T-cell (primary cell): ENCODE measurements at regions of chr12 and their contacts with region 1.

Region 1: GRCh38 chr12:123410041-123410412 is 26.1 kb downstream of the KMT5A start:
- DNase-seq: no peak
- ATAC-seq: no peak
- H3K4me3 ChIP-seq: no peak overlapping the region
- H3K4me3 Mint-ChIP-seq: no peak overlapping the region
- H3K27ac ChIP-seq: no peak overlapping the region
- H3K27ac Mint-ChIP-seq: no peak overlapping the region
- H3K4me1 ChIP-seq: no peaks in the 10 kb centered on the region
- H3K4me1 Mint-ChIP-seq: peaks cover 0 to 2% (median 0%) of the 10 kb centered on the region in 3 donors
- H3K27me3 ChIP-seq: no peaks in the 10 kb centered on the region
- H3K27me3 Mint-ChIP-seq: no peaks in the 10 kb centered on the region

Region 2: DNA sequence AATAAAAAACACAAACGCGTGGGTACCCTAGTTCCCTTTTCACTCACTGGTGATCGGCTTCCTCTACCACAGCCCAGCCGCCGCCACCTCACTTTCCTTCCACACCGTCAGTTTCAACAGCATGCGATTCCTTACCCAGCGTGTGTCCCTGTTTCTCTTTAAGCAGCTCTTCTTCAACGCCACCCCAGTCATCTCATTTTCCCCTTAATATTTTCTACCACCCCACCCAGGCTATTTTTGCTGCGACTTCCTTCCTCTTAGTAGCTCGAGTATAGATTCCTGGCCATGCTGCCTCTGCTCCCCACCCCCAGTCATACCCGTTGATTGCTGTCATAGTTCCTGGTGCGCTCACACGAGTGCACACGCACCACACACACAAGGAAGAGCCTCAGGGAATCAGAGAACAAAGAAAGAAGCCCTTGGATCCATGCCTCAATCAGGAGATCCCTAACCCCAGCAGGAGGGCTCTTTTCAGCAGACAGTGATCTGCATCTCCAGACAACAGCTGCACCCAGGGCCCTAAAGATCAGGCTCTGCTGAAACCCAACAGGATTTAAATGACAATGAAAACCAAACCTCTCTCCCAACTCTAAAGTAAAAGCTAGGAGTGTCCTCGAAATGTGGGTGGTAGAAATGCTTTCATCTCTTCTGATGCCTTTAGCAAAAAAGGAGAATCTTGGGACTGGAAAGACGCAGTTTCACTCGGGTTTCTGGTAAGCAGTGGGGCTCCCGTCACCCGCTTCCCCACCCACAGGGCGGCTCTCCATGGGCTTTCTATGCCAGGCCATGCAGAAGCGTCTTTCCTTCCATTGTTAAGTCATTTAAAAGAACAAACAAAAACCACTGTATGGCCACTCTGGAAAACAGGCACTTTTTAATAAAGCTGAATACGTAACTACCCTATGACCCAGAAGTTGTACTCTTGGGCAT is 537.9 kb before region 1 on chr12:
- CTCF ChIA-PET with region 1: no interaction called
- POLR2A ChIA-PET with region 1: no interaction called
- DNase-seq: peak in 16 of 35 experiments; percentile 22 to 50 (median 36)
- ATAC-seq: peak; percentile 45 to 68 (median 55)
- H3K4me3 ChIP-seq: peak overlapping the region; percentile 34 to 65
- H3K4me3 Mint-ChIP-seq: peak overlapping the region; percentile 81 to 85 (median 83)
- H3K27ac ChIP-seq: peak overlapping the region; percentile 79
- H3K27ac Mint-ChIP-seq: peak overlapping the region; percentile 97 to 99
- H3K4me1 ChIP-seq: peaks cover 34 to 68% of the 10 kb centered on the region in 2 experiments
- H3K4me1 Mint-ChIP-seq: peaks cover 69 to 79% (median 77%) of the 10 kb centered on the region in 3 donors
- H3K27me3 ChIP-seq: no peaks in the 10 kb centered on the region
- H3K27me3 Mint-ChIP-seq: no peaks in the 10 kb centered on the region

Region 3: GRCh38 chr12:123305136-123305535 is 104.9 kb before region 1 on chr12:
- CTCF ChIA-PET with region 1: no interaction called
- POLR2A ChIA-PET with region 1: interaction called in 1 of 2 experiments, 15 read pairs
- DNase-seq: no peak
- ATAC-seq: no peak
- H3K4me3 ChIP-seq: no peak overlapping the region
- H3K4me3 Mint-ChIP-seq: no peak overlapping the region
- H3K27ac ChIP-seq: no peak overlapping the region
- H3K27ac Mint-ChIP-seq: peak overlapping the region in 1 of 2 donors; percentile 47
- H3K4me1 ChIP-seq: no peaks in the 10 kb centered on the region
- H3K4me1 Mint-ChIP-seq: no peaks in the 10 kb centered on the region
- H3K27me3 ChIP-seq: no peaks in the 10 kb centered on the region
- H3K27me3 Mint-ChIP-seq: no peaks in the 10 kb centered on the region

Region 4: DNA sequence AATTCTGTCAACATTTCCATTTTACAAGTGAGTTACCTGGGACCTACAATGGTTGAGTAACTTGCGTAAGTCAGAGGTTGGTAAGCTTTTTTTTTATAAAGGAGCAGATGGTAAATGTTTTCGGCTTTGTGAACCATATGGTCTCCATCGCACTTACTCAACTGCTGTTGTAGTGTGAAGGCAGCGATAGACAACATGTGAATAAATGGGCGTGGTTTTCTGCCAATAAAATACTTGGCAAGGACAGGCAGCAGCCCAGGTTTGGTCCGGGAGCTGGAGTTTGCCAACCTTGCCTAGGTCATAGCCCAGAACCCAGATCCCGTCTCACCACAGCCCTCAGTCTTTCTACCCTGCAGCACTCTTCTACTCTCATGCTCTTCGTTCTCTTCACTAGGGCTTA is 198.2 kb after region 1 on chr12:
- CTCF ChIA-PET with region 1: no interaction called
- POLR2A ChIA-PET with region 1: interaction called, 4 to 12 read pairs
- DNase-seq: no peak
- ATAC-seq: no peak
- H3K4me3 ChIP-seq: no peak overlapping the region
- H3K4me3 Mint-ChIP-seq: no peak overlapping the region
- H3K27ac ChIP-seq: no peak overlapping the region
- H3K27ac Mint-ChIP-seq: no peak overlapping the region
- H3K4me1 ChIP-seq: peaks cover 0 to 9% of the 10 kb centered on the region in 2 experiments
- H3K4me1 Mint-ChIP-seq: peaks cover 7 to 17% (median 12%) of the 10 kb centered on the region in 3 donors
- H3K27me3 ChIP-seq: no peaks in the 10 kb centered on the region
- H3K27me3 Mint-ChIP-seq: no peaks in the 10 kb centered on the region